Caco-2 (cell line): ENCODE measurements at regions of chr6 and their contacts with region 1.

Region 1: DNA sequence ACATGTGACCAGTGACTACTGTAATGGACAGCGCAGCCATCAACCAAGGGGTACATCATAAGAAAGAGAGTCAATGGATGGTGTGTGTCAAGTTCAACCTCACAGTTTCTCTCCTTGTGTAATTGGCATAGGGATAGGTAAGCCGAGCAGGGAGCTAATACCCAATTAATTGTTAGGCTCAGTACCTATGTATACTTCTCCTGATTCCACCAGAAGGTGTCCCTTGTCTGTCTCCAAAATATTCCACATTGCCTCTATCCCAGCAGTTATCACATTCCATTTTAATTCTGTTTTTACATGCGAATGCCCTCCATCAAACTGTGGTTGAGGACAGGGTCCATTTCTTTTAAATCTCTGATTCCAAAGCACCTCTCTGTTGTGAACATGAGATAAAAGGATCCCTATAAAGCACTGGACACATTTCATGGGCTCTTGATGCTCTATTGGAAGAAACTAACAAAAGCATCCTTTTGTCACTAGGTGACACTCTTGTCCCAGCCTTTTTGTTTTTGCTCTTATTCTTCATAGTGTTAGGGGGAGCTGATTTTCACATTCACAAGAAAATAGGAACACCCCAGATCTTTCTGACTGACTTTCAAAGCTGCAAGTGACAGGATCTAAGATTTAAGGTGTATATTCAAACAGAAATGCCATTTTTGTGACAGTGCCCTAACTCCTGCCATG is 38.9 kb downstream of the FBXO9 start:
- DNase-seq: peak in 1 of 2 experiments; percentile 21
- H3K4me3 ChIP-seq: no peak overlapping the region
- H3K4me3 Mint-ChIP-seq: no peak overlapping the region
- H3K27ac Mint-ChIP-seq: no peak overlapping the region
- H3K4me1 ChIP-seq: no peaks in the 10 kb centered on the region
- H3K4me1 Mint-ChIP-seq: no peaks in the 10 kb centered on the region
- H3K27me3 ChIP-seq: no peaks in the 10 kb centered on the region
- H3K27me3 Mint-ChIP-seq: no peaks in the 10 kb centered on the region
- CTCF ChIP-seq: peak; percentile 41 to 53

Region 2: DNA sequence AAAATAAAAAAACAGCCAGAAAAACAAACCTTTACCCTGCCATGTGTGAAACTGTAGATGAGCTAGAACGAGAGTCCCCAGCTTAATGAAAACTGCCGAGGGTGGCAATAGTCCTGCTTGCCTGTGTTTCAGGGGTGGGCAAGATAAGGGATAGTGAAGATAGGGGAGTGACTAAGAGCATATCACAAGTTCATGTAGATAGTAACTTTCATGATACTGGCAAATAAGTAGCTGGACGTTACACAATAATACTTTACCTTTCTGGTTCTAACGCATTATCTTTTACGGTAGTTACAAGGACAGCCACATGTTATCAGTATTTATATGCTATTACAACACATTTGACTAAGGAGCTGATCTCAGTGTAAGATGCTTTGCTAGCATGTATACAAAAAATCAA is 48.3 kb before region 1 on chr6:
- CTCF ChIA-PET with region 1: interaction called, 10 read pairs
- POLR2A ChIA-PET with region 1: no interaction called
- intact Hi-C with region 1: no loop called
- DNase-seq: no peak
- H3K4me3 ChIP-seq: no peak overlapping the region
- H3K4me3 Mint-ChIP-seq: no peak overlapping the region
- H3K27ac Mint-ChIP-seq: peak overlapping the region; percentile 45
- H3K4me1 ChIP-seq: peaks cover 20% of the 10 kb centered on the region
- H3K4me1 Mint-ChIP-seq: peaks cover 35% of the 10 kb centered on the region
- H3K27me3 ChIP-seq: no peaks in the 10 kb centered on the region
- H3K27me3 Mint-ChIP-seq: no peaks in the 10 kb centered on the region
- CTCF ChIP-seq: no peak

Region 3: DNA sequence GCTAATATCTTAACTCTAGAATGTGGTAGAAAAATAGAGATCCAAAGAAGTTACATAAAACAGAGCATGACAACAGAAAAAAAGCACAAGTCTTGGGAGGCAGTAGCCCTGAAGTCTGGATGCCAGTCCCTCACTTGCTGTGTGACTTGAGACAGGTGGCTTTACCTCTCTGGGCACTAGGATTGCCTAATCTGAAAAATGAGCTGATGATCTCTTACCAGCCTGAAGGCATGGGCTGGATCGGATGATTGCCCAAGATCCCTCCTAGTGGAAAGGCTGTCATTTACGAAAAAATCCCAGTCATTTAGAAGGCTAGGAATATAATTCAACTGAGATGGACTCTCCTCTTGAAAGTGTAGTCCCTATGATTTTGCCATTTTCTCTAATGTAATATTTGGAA is 55.4 kb after region 1 on chr6:
- CTCF ChIA-PET with region 1: no interaction called
- POLR2A ChIA-PET with region 1: no interaction called
- intact Hi-C with region 1: loop called (anchors 2 kb)
- DNase-seq: peak; percentile 52
- H3K4me3 ChIP-seq: no peak overlapping the region
- H3K4me3 Mint-ChIP-seq: no peak overlapping the region
- H3K27ac Mint-ChIP-seq: no peak overlapping the region
- H3K4me1 ChIP-seq: peaks cover 21% of the 10 kb centered on the region
- H3K4me1 Mint-ChIP-seq: no peaks in the 10 kb centered on the region
- H3K27me3 ChIP-seq: no peaks in the 10 kb centered on the region
- H3K27me3 Mint-ChIP-seq: no peaks in the 10 kb centered on the region
- CTCF ChIP-seq: no peak

Region 4: GRCh38 chr6:53179961-53180651 is 76.0 kb after region 1 on chr6:
- CTCF ChIA-PET with region 1: no interaction called
- POLR2A ChIA-PET with region 1: no interaction called
- intact Hi-C with region 1: no loop called
- DNase-seq: no peak
- H3K4me3 ChIP-seq: no peak overlapping the region
- H3K4me3 Mint-ChIP-seq: no peak overlapping the region
- H3K27ac Mint-ChIP-seq: no peak overlapping the region
- H3K4me1 ChIP-seq: no peaks in the 10 kb centered on the region
- H3K4me1 Mint-ChIP-seq: no peaks in the 10 kb centered on the region
- H3K27me3 ChIP-seq: no peaks in the 10 kb centered on the region
- H3K27me3 Mint-ChIP-seq: no peaks in the 10 kb centered on the region
- CTCF ChIP-seq: no peak

Region 5: GRCh38 chr6:53263917-53264316 is 159.8 kb after region 1 on chr6:
- CTCF ChIA-PET with region 1: no interaction called
- POLR2A ChIA-PET with region 1: no interaction called
- intact Hi-C with region 1: no loop called
- DNase-seq: no peak
- H3K4me3 ChIP-seq: no peak overlapping the region
- H3K4me3 Mint-ChIP-seq: no peak overlapping the region
- H3K27ac Mint-ChIP-seq: no peak overlapping the region
- H3K4me1 ChIP-seq: no peaks in the 10 kb centered on the region
- H3K4me1 Mint-ChIP-seq: no peaks in the 10 kb centered on the region
- H3K27me3 ChIP-seq: no peaks in the 10 kb centered on the region
- H3K27me3 Mint-ChIP-seq: no peaks in the 10 kb centered on the region
- CTCF ChIP-seq: no peak

Region 6: GRCh38 chr6:53294095-53294494 is 190.0 kb after region 1 on chr6:
- CTCF ChIA-PET with region 1: no interaction called
- POLR2A ChIA-PET with region 1: no interaction called
- intact Hi-C with region 1: loop called (anchors 10 kb)
- DNase-seq: peak in 1 of 2 experiments; percentile 16
- H3K4me3 ChIP-seq: no peak overlapping the region
- H3K4me3 Mint-ChIP-seq: no peak overlapping the region
- H3K27ac Mint-ChIP-seq: no peak overlapping the region
- H3K4me1 ChIP-seq: no peaks in the 10 kb centered on the region
- H3K4me1 Mint-ChIP-seq: no peaks in the 10 kb centered on the region
- H3K27me3 ChIP-seq: no peaks in the 10 kb centered on the region
- H3K27me3 Mint-ChIP-seq: no peaks in the 10 kb centered on the region
- CTCF ChIP-seq: peak; percentile 47 to 65

Region 7: GRCh38 chr6:53484476-53485280 is 380.5 kb after region 1 on chr6:
- CTCF ChIA-PET with region 1: interaction called, 3 read pairs
- POLR2A ChIA-PET with region 1: no interaction called
- intact Hi-C with region 1: loop called (anchors 1 kb)
- DNase-seq: peak; percentile 46 to 63
- H3K4me3 ChIP-seq: no peak overlapping the region
- H3K4me3 Mint-ChIP-seq: no peak overlapping the region
- H3K27ac Mint-ChIP-seq: no peak overlapping the region
- H3K4me1 ChIP-seq: peaks cover 8% of the 10 kb centered on the region; the same call in 1 of the 2 replicates
- H3K4me1 Mint-ChIP-seq: peaks cover 12% of the 10 kb centered on the region
- H3K27me3 ChIP-seq: no peaks in the 10 kb centered on the region; the same call in 1 of the 2 replicates
- H3K27me3 Mint-ChIP-seq: no peaks in the 10 kb centered on the region
- CTCF ChIP-seq: peak; percentile 88 to 89